ENCODE measurements at regions of chr11 and their contacts with region 1.

Region 1: GRCh38 chr11:47642099-47642855 is at the start of gene MTCH2:
- DNase-seq: peak; percentile 98
- H3K4me3 ChIP-seq: peak within 1 kb of the TSS; percentile 93
- H3K4me1 ChIP-seq: peaks cover 15% of the 10 kb centered on the region
- H3K27me3 ChIP-seq: no peaks in the 10 kb centered on the region

Region 2: DNA sequence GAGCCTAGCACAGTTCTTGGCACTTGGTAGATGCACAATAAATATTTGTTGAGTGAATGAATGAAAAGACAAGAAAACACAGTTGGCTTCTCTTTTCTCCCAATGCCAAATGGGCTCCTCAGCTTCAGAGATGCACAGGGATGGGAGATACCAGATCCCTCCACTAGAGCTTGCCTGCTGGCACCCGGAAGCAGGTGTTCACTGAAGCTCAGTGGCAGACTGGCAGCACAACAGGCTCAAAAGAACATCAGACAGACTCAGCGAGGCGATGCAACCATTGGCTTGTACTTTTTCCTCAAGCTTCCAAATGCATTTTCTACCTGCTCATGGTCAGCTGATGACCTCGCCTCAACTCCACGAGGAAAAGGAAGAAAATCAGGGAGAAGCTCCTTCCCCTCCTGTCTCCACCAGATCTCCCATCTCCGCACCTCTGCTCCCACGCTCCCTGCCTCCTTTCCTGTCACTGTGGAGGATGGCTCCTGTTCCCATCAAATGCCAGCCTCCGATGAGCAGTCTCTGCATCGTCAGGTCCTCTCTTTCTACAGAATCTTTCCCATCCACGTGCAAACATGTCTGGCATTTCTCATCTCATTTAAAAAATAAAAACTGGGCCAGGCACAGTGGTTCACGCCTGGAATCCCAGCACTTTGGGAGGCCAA is 199.1 kb before region 1 on chr11:
- in situ Hi-C with region 1: no loop called
- DNase-seq: no peak
- H3K4me3 ChIP-seq: no peak overlapping the region
- H3K4me1 ChIP-seq: no peaks in the 10 kb centered on the region
- H3K27me3 ChIP-seq: no peaks in the 10 kb centered on the region

Region 3: GRCh38 chr11:47715082-47715669 is 72.9 kb after region 1 on chr11 and contains the start of gene AGBL2:
- in situ Hi-C with region 1: loop called (anchors 10 kb)
- DNase-seq: no peak
- H3K4me3 ChIP-seq: no peak within 1 kb of the TSS
- H3K4me1 ChIP-seq: no peaks in the 10 kb centered on the region
- H3K27me3 ChIP-seq: no peaks in the 10 kb centered on the region

Region 4: DNA sequence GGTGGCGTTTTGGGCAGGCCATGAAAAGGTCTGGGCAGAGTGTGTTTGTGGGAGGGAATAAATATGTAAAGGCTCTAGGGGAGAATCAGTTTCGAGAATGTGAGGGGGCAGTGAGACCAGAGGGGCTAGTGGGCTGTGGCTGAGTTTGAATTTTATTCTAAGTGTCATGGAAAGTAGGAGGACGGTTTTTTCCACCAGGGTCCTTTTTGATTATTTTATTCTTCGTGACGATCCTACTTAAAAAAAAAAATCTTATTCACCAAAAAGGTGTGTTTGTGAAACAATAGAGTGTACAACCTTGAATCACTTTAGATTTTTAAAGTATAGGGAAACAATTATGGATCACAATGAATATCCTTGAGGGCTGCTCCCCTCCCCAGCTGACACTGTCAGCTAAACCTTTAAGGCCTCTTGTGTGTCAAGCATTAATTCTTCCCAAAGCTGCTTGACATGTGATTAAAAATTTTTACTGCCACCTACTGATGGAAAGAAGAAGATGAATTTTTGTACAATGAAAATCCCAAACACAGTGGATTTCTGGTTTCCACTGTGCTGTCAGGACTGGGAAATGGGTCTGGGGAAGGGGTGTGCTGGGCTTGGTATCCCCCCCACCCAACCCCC is 466.9 kb after region 1 on chr11:
- in situ Hi-C with region 1: loop called (anchors 25 kb)
- DNase-seq: peak; percentile 22 to 88
- H3K4me3 ChIP-seq: no peak overlapping the region; the same call in 1 of the 2 replicates
- H3K4me1 ChIP-seq: peaks cover 21% of the 10 kb centered on the region
- H3K27me3 ChIP-seq: no peaks in the 10 kb centered on the region